Spleen (tissue), 13 donors: ENCODE measurements at regions of chr5 and their contacts with region 1.

Region 1: DNA sequence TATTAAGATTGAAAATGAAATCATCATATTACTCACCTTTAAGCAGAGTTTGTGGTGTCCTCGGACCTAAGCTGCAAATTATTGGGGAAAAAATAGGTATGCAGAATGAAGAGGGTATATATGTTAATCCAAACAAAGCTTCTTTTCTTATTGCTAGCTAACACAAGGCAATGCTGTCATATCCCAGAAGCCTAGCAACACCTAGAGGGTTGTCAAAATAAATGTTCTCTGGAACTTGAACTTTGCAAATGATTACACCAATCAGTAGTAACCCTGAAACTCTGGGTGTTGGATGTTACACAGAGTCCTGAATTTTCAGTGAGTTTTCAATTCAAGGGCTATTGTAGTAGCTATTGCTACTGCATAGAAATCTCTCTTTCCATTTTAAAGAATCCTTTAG is at the start of gene C6:
- DNase-seq: no peak
- H3K4me3 ChIP-seq: no peak within 1 kb of the TSS
- H3K27ac ChIP-seq: no peak within 1 kb of the TSS
- H3K4me1 ChIP-seq: no peaks in the 10 kb centered on the region
- H3K27me3 ChIP-seq: no peaks in the 10 kb centered on the region
- CTCF ChIP-seq: no peak
- POLR2A ChIP-seq: no peak
- total RNA-seq, gene C6: 0.58 to 0.65 TPM in 2 of 7 donors, not detected in the others

Region 2: GRCh38 chr5:41234475-41234874 is 21.1 kb after region 1 on chr5:
- intact Hi-C with region 1: loop called (anchors 2 kb)
- DNase-seq: no peak
- H3K4me3 ChIP-seq: no peak overlapping the region
- H3K27ac ChIP-seq: no peak overlapping the region
- H3K4me1 ChIP-seq: no peaks in the 10 kb centered on the region
- H3K27me3 ChIP-seq: no peaks in the 10 kb centered on the region
- CTCF ChIP-seq: no peak
- POLR2A ChIP-seq: no peak

Region 3: DNA sequence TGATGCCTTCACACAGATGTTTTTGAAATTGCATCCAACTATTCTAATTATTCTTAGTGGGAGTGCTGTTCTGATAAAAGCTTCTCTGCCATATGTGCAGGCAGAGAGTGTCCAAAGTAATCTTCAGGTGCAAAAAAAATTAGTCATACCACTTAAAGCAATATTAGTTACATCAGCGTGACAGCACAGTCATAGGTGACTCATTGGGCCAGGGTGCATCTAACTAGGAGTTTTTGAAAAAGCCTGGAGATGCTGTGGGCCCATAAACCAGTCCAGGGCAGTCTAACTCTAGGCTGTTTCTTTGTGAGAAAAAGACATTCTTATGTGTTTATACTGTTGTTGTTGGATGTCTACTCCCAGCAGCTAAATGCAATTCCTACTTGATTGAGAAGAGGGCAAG is 33.0 kb after region 1 on chr5:
- intact Hi-C with region 1: no loop called
- DNase-seq: no peak
- H3K4me3 ChIP-seq: no peak overlapping the region
- H3K27ac ChIP-seq: no peak overlapping the region
- H3K4me1 ChIP-seq: no peaks in the 10 kb centered on the region
- H3K27me3 ChIP-seq: no peaks in the 10 kb centered on the region
- CTCF ChIP-seq: no peak
- POLR2A ChIP-seq: no peak